Endothelial cell of umbilical vein (primary cell): ENCODE measurements at regions of chr7 and their contacts with region 1.

Region 1: GRCh38 chr7:117750612-117751563 is 122.4 kb downstream of the CTTNBP2 start:
- DNase-seq: peak; percentile 21
- H3K4me3 ChIP-seq: no peak overlapping the region
- H3K27ac ChIP-seq: no peak overlapping the region
- H3K4me1 ChIP-seq: no peaks in the 10 kb centered on the region
- H3K27me3 ChIP-seq: no peaks in the 10 kb centered on the region
- CTCF ChIP-seq: no peak
- POLR2A ChIP-seq: no peak

Region 2: GRCh38 chr7:117809958-117810357 is 59.1 kb after region 1 on chr7:
- CTCF ChIA-PET with region 1: no interaction called
- POLR2A ChIA-PET with region 1: no interaction called
- dilution Hi-C with region 1: no loop called
- intact Hi-C with region 1: no loop called
- DNase-seq: no peak
- H3K4me3 ChIP-seq: no peak overlapping the region
- H3K27ac ChIP-seq: no peak overlapping the region
- H3K4me1 ChIP-seq: no peaks in the 10 kb centered on the region
- H3K27me3 ChIP-seq: peaks cover 0 to 3% of the 10 kb centered on the region in 2 experiments
- CTCF ChIP-seq: no peak
- POLR2A ChIP-seq: no peak

Region 3: DNA sequence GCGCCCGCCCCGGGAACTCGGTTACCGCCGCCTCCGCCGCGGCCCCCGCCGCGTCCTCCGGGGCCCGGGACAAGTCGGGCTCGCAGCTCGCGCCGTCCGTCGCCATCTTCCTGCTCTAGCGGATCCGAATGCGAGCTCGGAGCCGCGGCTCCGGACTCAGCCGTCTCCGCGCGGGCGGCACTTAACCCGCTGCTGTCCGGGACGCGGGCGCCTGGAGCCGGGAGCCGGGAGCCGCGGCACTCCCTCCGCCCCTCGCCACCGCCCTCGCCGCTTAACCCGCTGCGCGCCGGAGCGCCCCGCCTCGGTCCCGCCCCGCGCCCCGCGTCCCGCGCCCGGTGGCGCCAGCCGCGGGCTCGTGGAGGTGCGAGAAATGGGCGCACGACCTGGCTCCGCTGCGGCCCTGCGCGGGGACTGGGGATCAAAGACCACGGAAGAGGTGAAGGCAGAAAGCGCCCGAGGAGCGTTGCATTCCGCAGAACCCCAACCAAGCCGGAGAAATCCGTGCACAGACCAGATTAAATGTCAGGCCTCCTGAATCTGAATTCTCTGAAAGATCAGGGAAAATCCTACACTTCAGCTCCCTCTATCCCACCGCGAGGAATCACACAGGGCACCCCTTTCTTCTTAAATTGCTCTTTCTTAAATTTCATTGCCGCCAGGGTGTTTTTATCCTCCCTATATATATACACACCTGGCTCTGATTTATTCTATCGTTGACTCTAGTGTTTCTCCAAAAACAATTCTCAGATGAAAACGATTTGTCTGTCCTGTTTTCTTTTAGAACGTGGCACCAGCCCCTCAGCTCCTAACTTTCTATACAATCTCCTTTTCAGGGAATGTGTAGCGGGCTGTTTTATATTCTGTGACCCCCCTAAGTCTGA is 122.7 kb after region 1 on chr7 and contains the start of gene CTTNBP2:
- CTCF ChIA-PET with region 1: interaction called, 16 read pairs
- POLR2A ChIA-PET with region 1: no interaction called
- dilution Hi-C with region 1: no loop called
- intact Hi-C with region 1: loop called (anchors 5 kb)
- DNase-seq: peak; percentile 44
- H3K4me3 ChIP-seq: peak within 1 kb of the TSS; percentile 42 to 58 (median 50)
- H3K27ac ChIP-seq: no peak within 1 kb of the TSS
- H3K4me1 ChIP-seq: peaks cover 12% of the 10 kb centered on the region
- H3K27me3 ChIP-seq: peaks cover 35 to 40% of the 10 kb centered on the region in 2 experiments
- CTCF ChIP-seq: no peak
- POLR2A ChIP-seq: no peak
- total RNA-seq, gene CTTNBP2: 0.25 and 0.35 TPM in 2 replicates

Region 4: GRCh38 chr7:118104812-118105441 is 354.0 kb after region 1 on chr7:
- CTCF ChIA-PET with region 1: interaction called, 9 read pairs
- POLR2A ChIA-PET with region 1: no interaction called
- dilution Hi-C with region 1: no loop called
- intact Hi-C with region 1: loop called (anchors 2 kb)
- DNase-seq: peak; percentile 27
- H3K4me3 ChIP-seq: no peak overlapping the region
- H3K27ac ChIP-seq: no peak overlapping the region
- H3K4me1 ChIP-seq: no peaks in the 10 kb centered on the region
- H3K27me3 ChIP-seq: no peaks in the 10 kb centered on the region
- CTCF ChIP-seq: peak in 1 of 2 donors; percentile 20
- POLR2A ChIP-seq: no peak

Region 5: GRCh38 chr7:118153551-118154177 is 402.8 kb after region 1 on chr7:
- CTCF ChIA-PET with region 1: interaction called, 24 read pairs
- POLR2A ChIA-PET with region 1: no interaction called
- dilution Hi-C with region 1: no loop called
- intact Hi-C with region 1: loop called (anchors 1 kb)
- DNase-seq: peak; percentile 57
- H3K4me3 ChIP-seq: no peak overlapping the region
- H3K27ac ChIP-seq: no peak overlapping the region
- H3K4me1 ChIP-seq: no peaks in the 10 kb centered on the region
- H3K27me3 ChIP-seq: peaks cover 0 to 6% of the 10 kb centered on the region in 2 experiments
- CTCF ChIP-seq: peak in 1 of 2 donors; percentile 40
- POLR2A ChIP-seq: no peak

Region 6: GRCh38 chr7:118195837-118196474 is 445.1 kb after region 1 on chr7:
- CTCF ChIA-PET with region 1: interaction called, 11 read pairs
- POLR2A ChIA-PET with region 1: no interaction called
- dilution Hi-C with region 1: no loop called
- intact Hi-C with region 1: loop called (anchors 1 kb)
- DNase-seq: peak; percentile 68
- H3K4me3 ChIP-seq: no peak overlapping the region
- H3K27ac ChIP-seq: no peak overlapping the region
- H3K4me1 ChIP-seq: no peaks in the 10 kb centered on the region
- H3K27me3 ChIP-seq: no peaks in the 10 kb centered on the region
- CTCF ChIP-seq: peak; percentile 61 to 64
- POLR2A ChIP-seq: no peak